ENCODE measurements at regions of chr2 and their contacts with region 1.

Region 1: DNA sequence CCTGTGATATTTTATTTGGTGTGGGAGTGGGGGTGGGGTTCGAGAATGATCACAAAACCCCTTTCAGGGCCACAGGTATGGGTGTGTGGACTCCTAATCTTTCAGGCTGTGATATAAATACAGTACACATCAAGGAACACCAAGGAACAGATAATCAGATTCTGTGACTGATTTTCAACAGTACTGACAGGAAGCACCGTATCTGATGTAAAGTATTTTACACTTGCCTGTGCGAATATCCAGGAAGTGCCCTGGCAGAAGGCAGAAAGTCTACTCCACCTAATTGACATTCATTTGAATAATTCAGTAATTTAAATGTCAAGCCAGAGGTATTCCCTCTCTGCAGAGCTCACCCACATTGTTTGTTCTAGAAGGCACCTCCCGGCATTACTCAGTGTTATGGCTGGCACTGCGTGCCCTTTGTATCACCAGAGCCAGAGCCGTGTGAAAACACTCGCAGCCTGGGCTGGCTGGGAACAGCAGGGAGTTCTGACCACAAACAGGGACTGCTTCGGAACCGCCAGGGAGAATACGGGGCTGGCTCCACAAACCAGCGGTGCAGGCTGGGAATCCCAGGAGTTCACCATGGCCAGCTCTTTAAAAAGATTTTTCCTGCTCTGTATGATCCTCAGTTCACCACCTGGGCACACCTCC is 91.8 kb downstream of the ACVR1 start:
- DNase-seq: no peak
- ATAC-seq: peak; percentile 91
- H3K4me3 ChIP-seq: peak overlapping the region in 1 of 2 experiments; percentile 3; a peak in 1 of 4 replicates
- H3K27ac ChIP-seq: peak overlapping the region; percentile 29; the same call in 1 of the 2 replicates
- H3K4me1 ChIP-seq: peaks cover 11% of the 10 kb centered on the region
- H3K27me3 ChIP-seq: no peaks in the 10 kb centered on the region
- CTCF ChIP-seq: no peak

Region 2: GRCh38 chr2:157876066-157876787 is 91.9 kb after region 1 on chr2 and contains the start of gene ACVR1:
- CTCF ChIA-PET with region 1: no interaction called
- POLR2A ChIA-PET with region 1: no interaction called
- in situ Hi-C with region 1: no loop called
- intact Hi-C with region 1: loop called (anchors 10 kb)
- DNase-seq: no peak
- ATAC-seq: peak; percentile 97
- H3K4me3 ChIP-seq: peak within 1 kb of the TSS; percentile 63 to 91
- H3K27ac ChIP-seq: peak within 1 kb of the TSS; percentile 82
- H3K4me1 ChIP-seq: peaks cover 22% of the 10 kb centered on the region
- H3K27me3 ChIP-seq: no peaks in the 10 kb centered on the region
- CTCF ChIP-seq: peak; percentile 74
- total RNA-seq, gene ACVR1: 27.6 TPM